Ovary (tissue), 10 donors: ENCODE measurements at regions of chr5 and their contacts with region 1.

Region 1: GRCh38 chr5:55232985-55233928 is at the start of gene CCNO:
- DNase-seq: peak; percentile 61 to 81 (median 69)
- H3K4me3 ChIP-seq: peak within 1 kb of the TSS; percentile 40
- H3K27ac ChIP-seq: peak within 1 kb of the TSS in 1 of 2 donors; percentile 57
- H3K4me1 ChIP-seq: peaks cover 13% of the 10 kb centered on the region
- H3K27me3 ChIP-seq: no peaks in the 10 kb centered on the region
- CTCF ChIP-seq: no peak
- EP300 ChIP-seq: no peak
- POLR2A ChIP-seq: no peak
- total RNA-seq, gene CCNO: 0.36 to 11.8 (median 1.7) TPM

Region 2: DNA sequence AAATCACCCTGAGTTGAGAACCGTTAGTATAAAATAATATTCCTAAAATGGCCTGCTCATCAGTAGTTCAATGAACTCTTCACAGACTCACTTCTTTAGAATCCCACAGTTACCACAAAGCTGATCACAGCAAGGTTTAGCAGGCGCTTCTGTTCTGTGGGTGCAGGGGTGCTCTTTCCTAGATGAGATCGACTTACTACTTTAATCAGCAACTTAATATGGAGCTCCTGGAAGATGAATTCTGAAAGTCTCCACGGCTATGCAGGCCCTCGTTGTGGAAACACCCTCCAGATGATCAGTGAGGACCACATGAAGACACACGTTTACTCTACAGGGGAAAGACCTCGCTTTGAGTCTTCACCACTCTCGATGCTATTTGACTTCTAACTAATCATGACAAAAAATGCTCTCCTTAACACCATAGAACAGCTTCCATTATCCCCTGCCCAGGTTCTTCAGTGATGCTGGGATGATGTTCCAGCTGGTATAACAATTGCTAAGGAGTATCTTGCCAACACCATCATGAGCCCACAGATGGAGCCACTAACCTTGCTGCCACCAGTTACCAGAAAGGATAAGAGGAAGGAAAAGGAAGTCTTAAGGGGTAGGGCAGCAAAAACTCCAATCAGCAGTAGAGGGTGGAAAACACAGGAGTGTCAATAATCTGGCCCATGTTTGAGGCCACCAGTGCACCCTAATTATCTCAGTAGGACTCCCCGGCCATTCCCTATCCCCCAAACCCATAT is 91.1 kb before region 1 on chr5:
- intact Hi-C with region 1: no loop called
- DNase-seq: no peak
- H3K4me3 ChIP-seq: no peak overlapping the region
- H3K27ac ChIP-seq: no peak overlapping the region
- H3K4me1 ChIP-seq: no peaks in the 10 kb centered on the region
- H3K27me3 ChIP-seq: no peaks in the 10 kb centered on the region
- CTCF ChIP-seq: no peak
- EP300 ChIP-seq: no peak
- POLR2A ChIP-seq: no peak

Region 3: GRCh38 chr5:55172051-55172899 is 61.0 kb before region 1 on chr5:
- intact Hi-C with region 1: loop called in 2 of 4 experiments (anchors 10 kb)
- DNase-seq: peak in 3 of 5 donors; percentile 24 to 53 (median 25)
- H3K4me3 ChIP-seq: peak overlapping the region; percentile 42
- H3K27ac ChIP-seq: no peak overlapping the region
- H3K4me1 ChIP-seq: peaks cover 4% of the 10 kb centered on the region
- H3K27me3 ChIP-seq: no peaks in the 10 kb centered on the region
- CTCF ChIP-seq: peak; percentile 43 to 69 (median 60)
- EP300 ChIP-seq: no peak
- POLR2A ChIP-seq: no peak